ENCODE measurements at regions of chr3 and their contacts with region 1.

Region 1: GRCh38 chr3:71583566-71584449 is at the start of gene FOXP1:
- DNase-seq: no peak
- H3K4me3 ChIP-seq: peak within 1 kb of the TSS; percentile 87
- H3K27ac ChIP-seq: peak within 1 kb of the TSS; percentile 84
- H3K27me3 ChIP-seq: no peaks in the 10 kb centered on the region
- CTCF ChIP-seq: no peak
- polyA plus RNA-seq, gene FOXP1: 53.3 and 56.6 TPM in 2 replicates

Region 2: GRCh38 chr3:71103430-71103921 is 480.3 kb before region 1 on chr3:
- CTCF ChIA-PET with region 1: interaction called, 13 read pairs
- POLR2A ChIA-PET with region 1: no interaction called
- DNase-seq: no peak
- H3K4me3 ChIP-seq: no peak overlapping the region
- H3K27ac ChIP-seq: peak overlapping the region; percentile 83
- H3K27me3 ChIP-seq: no peaks in the 10 kb centered on the region
- CTCF ChIP-seq: no peak

Region 3: DNA sequence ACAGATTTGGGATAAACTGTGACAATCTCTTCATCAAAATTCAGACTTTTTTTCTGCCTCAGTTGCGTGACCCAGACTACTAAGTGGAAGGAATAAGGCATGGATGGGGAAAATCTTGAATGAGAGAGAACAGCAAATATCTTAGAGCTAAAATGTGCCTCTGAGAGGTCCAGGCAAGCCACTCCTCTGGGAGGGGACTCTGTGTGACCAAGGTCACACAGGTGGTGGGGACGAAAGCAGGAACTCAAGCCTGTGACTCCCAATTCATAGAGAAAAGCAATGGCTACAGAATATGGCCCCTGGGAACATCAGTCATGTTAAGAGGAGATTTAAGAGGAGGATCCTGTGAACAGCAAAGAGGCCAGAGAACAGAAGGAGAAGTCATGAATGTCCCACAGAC is 268.4 kb before region 1 on chr3:
- CTCF ChIA-PET with region 1: interaction called, 11 read pairs
- POLR2A ChIA-PET with region 1: interaction called, 3 read pairs
- DNase-seq: no peak
- H3K4me3 ChIP-seq: no peak overlapping the region
- H3K27ac ChIP-seq: no peak overlapping the region
- H3K27me3 ChIP-seq: no peaks in the 10 kb centered on the region
- CTCF ChIP-seq: no peak

Region 4: GRCh38 chr3:71397046-71397445 is 186.8 kb before region 1 on chr3:
- CTCF ChIA-PET with region 1: interaction called, 10 read pairs
- POLR2A ChIA-PET with region 1: no interaction called
- DNase-seq: no peak
- H3K4me3 ChIP-seq: no peak overlapping the region
- H3K27ac ChIP-seq: no peak overlapping the region
- H3K27me3 ChIP-seq: no peaks in the 10 kb centered on the region
- CTCF ChIP-seq: peak; percentile 62

Region 5: GRCh38 chr3:71542521-71543370 is 41.1 kb before region 1 on chr3:
- CTCF ChIA-PET with region 1: interaction called, 5 read pairs
- POLR2A ChIA-PET with region 1: interaction called, 11 read pairs
- DNase-seq: peak; percentile 83
- H3K4me3 ChIP-seq: peak overlapping the region; percentile 37
- H3K27ac ChIP-seq: peak overlapping the region; percentile 68
- H3K27me3 ChIP-seq: no peaks in the 10 kb centered on the region
- CTCF ChIP-seq: no peak

Region 6: GRCh38 chr3:71601811-71602210 is 18.0 kb after region 1 on chr3:
- CTCF ChIA-PET with region 1: interaction called, 13 read pairs
- POLR2A ChIA-PET with region 1: interaction called, 4 read pairs
- DNase-seq: no peak
- H3K4me3 ChIP-seq: no peak overlapping the region
- H3K27ac ChIP-seq: no peak overlapping the region
- H3K27me3 ChIP-seq: no peaks in the 10 kb centered on the region
- CTCF ChIP-seq: no peak